ENCODE measurements at regions of chr12 and their contacts with region 1.

Region 1: GRCh38 chr12:93441617-93442410 is at the start of gene UBE2N:
- DNase-seq: peak; percentile 92 to 98 (median 95)
- ATAC-seq: peak; percentile 81
- H3K4me3 ChIP-seq: peak within 1 kb of the TSS; percentile 76
- H3K4me3 Mint-ChIP-seq: peak within 1 kb of the TSS; percentile 96
- H3K27ac ChIP-seq: peak within 1 kb of the TSS; percentile 89 to 91
- H3K27ac Mint-ChIP-seq: peak within 1 kb of the TSS; percentile 93
- H3K4me1 ChIP-seq: peaks cover 29% of the 10 kb centered on the region
- H3K4me1 Mint-ChIP-seq: peaks cover 53% of the 10 kb centered on the region
- H3K27me3 ChIP-seq: no peaks in the 10 kb centered on the region
- H3K27me3 Mint-ChIP-seq: no peaks in the 10 kb centered on the region
- CTCF ChIP-seq: no peak
- total RNA-seq, gene UBE2N: 89.8 to 101 TPM

Region 2: DNA sequence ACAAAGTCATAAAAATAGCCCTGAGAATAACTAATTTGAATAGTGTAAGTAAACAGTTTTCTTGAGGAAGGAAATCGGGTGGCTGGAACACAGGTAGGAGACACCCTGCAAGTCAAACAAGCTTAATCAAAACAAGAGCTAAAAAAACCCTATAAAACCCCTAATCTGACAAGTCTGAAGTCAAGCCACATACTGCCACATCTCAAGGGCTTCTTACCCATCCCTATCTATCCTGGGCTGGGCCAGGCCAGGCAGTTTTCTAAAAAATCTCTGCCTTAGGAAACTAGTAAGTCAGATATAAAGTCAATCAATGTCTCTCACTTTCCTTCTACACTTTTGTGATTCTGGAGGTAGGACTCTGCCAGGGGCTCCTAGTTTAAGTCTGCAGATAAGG is 15.4 kb before region 1 on chr12:
- CTCF ChIA-PET with region 1: interaction called, 11 read pairs
- POLR2A ChIA-PET with region 1: interaction called, 12 read pairs
- intact Hi-C with region 1: no loop called
- DNase-seq: no peak
- ATAC-seq: peak; percentile 37
- H3K4me3 ChIP-seq: no peak overlapping the region
- H3K4me3 Mint-ChIP-seq: peak overlapping the region; percentile 8
- H3K27ac ChIP-seq: no peak overlapping the region
- H3K27ac Mint-ChIP-seq: peak overlapping the region; percentile 80
- H3K4me1 ChIP-seq: peaks cover 38% of the 10 kb centered on the region
- H3K4me1 Mint-ChIP-seq: peaks cover 89% of the 10 kb centered on the region
- H3K27me3 ChIP-seq: no peaks in the 10 kb centered on the region
- H3K27me3 Mint-ChIP-seq: no peaks in the 10 kb centered on the region
- CTCF ChIP-seq: no peak

Region 3: GRCh38 chr12:93483151-93483807 is 41.5 kb after region 1 on chr12:
- CTCF ChIA-PET with region 1: no interaction called
- POLR2A ChIA-PET with region 1: no interaction called
- intact Hi-C with region 1: no loop called
- DNase-seq: no peak
- ATAC-seq: no peak
- H3K4me3 ChIP-seq: no peak overlapping the region
- H3K4me3 Mint-ChIP-seq: no peak overlapping the region
- H3K27ac ChIP-seq: no peak overlapping the region
- H3K27ac Mint-ChIP-seq: no peak overlapping the region
- H3K4me1 ChIP-seq: no peaks in the 10 kb centered on the region
- H3K4me1 Mint-ChIP-seq: no peaks in the 10 kb centered on the region
- H3K27me3 ChIP-seq: no peaks in the 10 kb centered on the region
- H3K27me3 Mint-ChIP-seq: no peaks in the 10 kb centered on the region
- CTCF ChIP-seq: no peak

Measured in CD4-positive, alpha-beta T cell (primary cell).